Common myeloid progenitor, CD34-positive (primary cell): ENCODE measurements at regions of chr15 and their contacts with region 1.

Region 1: DNA sequence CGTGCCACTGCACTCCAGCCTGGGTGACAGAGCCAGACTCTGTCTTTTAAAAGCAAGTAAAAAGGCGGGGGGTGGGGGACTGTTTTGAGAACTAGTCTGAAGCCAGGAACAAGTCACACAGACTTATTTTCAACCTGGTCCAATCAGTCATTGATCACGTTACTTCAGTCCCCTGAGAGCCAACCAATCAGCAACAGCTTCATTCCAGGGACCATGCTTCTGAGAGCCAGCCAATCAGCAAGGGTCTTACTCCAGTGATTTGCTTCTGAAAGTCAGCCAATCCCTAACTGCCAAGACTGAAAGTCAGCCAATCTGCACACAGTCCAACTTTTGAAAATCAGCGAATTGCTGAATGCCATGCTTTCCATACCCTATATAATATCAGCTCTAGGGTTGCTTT is 48.6 kb upstream of the C15orf39 start:
- DNase-seq: peak; percentile 86 to 93 (median 92)
- H3K4me3 ChIP-seq: peak overlapping the region in 3 of 7 experiments; percentile 34 to 45 (median 36)
- H3K27ac ChIP-seq: no peak overlapping the region
- H3K4me1 ChIP-seq: peaks cover 15 to 72% (median 57%) of the 10 kb centered on the region in 4 experiments
- H3K27me3 ChIP-seq: no peaks in the 10 kb centered on the region

Region 2: DNA sequence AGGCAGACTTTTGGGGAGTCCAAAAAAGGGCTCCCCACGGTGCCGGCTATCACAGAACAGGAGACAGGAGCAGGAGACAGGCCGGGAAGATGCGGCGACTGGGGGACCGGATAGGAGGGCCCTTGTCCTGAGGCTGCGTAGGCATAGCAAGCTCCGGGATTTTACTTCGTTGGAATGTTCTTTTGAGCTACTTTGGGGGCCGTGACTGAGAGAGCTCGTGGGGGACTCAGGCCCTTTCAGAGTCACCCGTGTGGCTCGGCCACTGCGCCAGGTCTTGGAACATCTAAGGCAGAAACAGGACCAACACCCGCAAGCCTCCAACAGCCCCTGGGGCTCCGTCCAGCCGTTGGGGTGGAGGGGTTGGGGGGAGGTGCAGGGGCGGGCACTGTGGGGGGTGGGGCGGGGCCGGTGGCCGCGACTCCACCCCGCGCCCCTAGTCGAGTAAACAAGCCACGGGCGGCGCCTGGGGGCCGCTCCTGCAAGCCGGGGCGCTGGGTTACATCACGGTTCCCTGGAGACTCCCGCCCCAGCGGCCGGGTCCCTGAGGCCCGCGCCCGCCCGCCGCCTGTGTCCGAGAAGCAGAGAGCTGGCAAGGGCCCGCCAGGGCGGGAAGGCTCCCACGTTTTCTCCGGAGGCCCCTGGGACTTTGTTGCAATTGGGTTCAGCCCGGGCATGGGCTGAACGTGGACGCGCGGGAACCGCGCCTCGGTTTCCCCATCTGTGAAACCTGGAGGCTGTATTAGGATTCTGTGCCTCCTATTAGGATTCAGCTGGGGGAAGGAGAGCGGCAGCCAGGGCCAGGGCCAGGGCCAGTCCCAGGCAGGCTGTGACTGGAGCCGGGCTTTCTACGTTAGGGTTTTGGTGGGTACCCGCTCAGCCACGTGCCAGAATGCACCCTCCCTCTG is 25.3 kb after region 1 on chr15:
- CTCF ChIA-PET with region 1: interaction called, 28 read pairs
- POLR2A ChIA-PET with region 1: interaction called, 4 read pairs
- DNase-seq: peak in 2 of 3 donors; percentile 60 to 69
- H3K4me3 ChIP-seq: peak overlapping the region in 5 of 7 experiments; percentile 43 to 70 (median 60)
- H3K27ac ChIP-seq: peak overlapping the region; percentile 58 to 84
- H3K4me1 ChIP-seq: peaks cover 18 to 92% (median 80%) of the 10 kb centered on the region in 4 experiments
- H3K27me3 ChIP-seq: no peaks in the 10 kb centered on the region